ENCODE measurements at regions of chr4 and their contacts with region 1.

Region 1: DNA sequence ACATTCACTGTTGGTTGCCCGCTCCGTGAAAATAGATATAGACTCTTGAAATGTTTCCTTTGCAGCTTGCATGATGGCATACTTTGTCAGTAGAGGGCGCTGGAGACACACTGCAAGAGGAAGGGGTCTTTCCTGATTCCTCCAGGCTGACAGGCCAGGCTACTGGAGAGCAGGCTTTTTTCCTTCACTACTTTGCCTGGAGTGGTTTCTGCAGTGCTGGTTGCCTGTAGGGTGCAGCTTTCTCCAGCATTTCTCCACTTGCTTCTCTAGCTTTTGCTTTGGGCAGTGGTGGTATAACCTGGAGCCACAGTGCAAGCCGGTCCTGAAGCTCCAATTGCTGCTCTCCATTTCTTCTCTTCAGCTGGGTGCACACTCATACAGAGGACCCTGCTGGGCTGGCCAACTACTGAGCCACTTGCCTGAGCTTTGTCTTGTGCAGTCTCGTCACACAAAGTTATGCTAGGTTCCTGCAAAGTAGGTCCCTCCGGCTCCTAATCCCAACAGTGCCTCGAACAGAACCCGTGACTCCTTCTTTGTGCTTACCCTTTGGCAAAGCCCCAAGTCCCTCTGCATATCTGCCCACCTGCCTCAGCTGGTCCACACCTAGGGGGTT is 46.3 kb downstream of the RASSF6 start:
- H3K4me3 ChIP-seq: no peak overlapping the region
- H3K27ac ChIP-seq: no peak overlapping the region
- H3K4me1 ChIP-seq: no peaks in the 10 kb centered on the region
- CTCF ChIP-seq: peak; percentile 71

Region 2: GRCh38 chr4:73406548-73406875 is 167.4 kb before region 1 on chr4:
- CTCF ChIA-PET with region 1: no interaction called
- POLR2A ChIA-PET with region 1: no interaction called
- H3K4me3 ChIP-seq: no peak overlapping the region
- H3K27ac ChIP-seq: no peak overlapping the region
- H3K4me1 ChIP-seq: no peaks in the 10 kb centered on the region
- CTCF ChIP-seq: no peak

Region 3: GRCh38 chr4:73586666-73587065 is 12.8 kb after region 1 on chr4:
- CTCF ChIA-PET with region 1: interaction called, 11 read pairs
- POLR2A ChIA-PET with region 1: no interaction called
- H3K4me3 ChIP-seq: no peak overlapping the region
- H3K27ac ChIP-seq: no peak overlapping the region
- H3K4me1 ChIP-seq: peaks cover 8% of the 10 kb centered on the region
- CTCF ChIP-seq: no peak

Region 4: GRCh38 chr4:73593631-73594241 is 19.8 kb after region 1 on chr4:
- CTCF ChIA-PET with region 1: interaction called, 10 read pairs
- POLR2A ChIA-PET with region 1: no interaction called
- H3K4me3 ChIP-seq: no peak overlapping the region
- H3K27ac ChIP-seq: no peak overlapping the region
- H3K4me1 ChIP-seq: peaks cover 8% of the 10 kb centered on the region
- CTCF ChIP-seq: no peak

Region 5: GRCh38 chr4:73653695-73654106 is 79.8 kb after region 1 on chr4:
- CTCF ChIA-PET with region 1: interaction called, 73 read pairs
- POLR2A ChIA-PET with region 1: no interaction called
- H3K4me3 ChIP-seq: no peak overlapping the region
- H3K27ac ChIP-seq: no peak overlapping the region
- H3K4me1 ChIP-seq: no peaks in the 10 kb centered on the region
- CTCF ChIP-seq: peak; percentile 56; the same call in 1 of the 2 replicates

Region 6: GRCh38 chr4:74133786-74134499 is 560.0 kb after region 1 on chr4:
- CTCF ChIA-PET with region 1: interaction called, 12 read pairs
- POLR2A ChIA-PET with region 1: no interaction called
- H3K4me3 ChIP-seq: no peak overlapping the region
- H3K27ac ChIP-seq: no peak overlapping the region
- H3K4me1 ChIP-seq: no peaks in the 10 kb centered on the region
- CTCF ChIP-seq: peak; percentile 29; the same call in 1 of the 2 replicates